ENCODE measurements at regions of chr6 and their contacts with region 1.

Region 1: GRCh38 chr6:38493931-38494547 is 145.7 kb downstream of the BTBD9 start:
- DNase-seq: peak; percentile 57 to 85 (median 76)
- ATAC-seq: peak; percentile 46
- H3K4me3 ChIP-seq: no peak overlapping the region
- H3K4me3 Mint-ChIP-seq: no peak overlapping the region
- H3K27ac ChIP-seq: no peak overlapping the region
- H3K27ac Mint-ChIP-seq: no peak overlapping the region
- H3K4me1 ChIP-seq: no peaks in the 10 kb centered on the region
- H3K4me1 Mint-ChIP-seq: no peaks in the 10 kb centered on the region
- H3K27me3 ChIP-seq: no peaks in the 10 kb centered on the region
- H3K27me3 Mint-ChIP-seq: no peaks in the 10 kb centered on the region
- CTCF ChIP-seq: peak; percentile 99

Region 2: DNA sequence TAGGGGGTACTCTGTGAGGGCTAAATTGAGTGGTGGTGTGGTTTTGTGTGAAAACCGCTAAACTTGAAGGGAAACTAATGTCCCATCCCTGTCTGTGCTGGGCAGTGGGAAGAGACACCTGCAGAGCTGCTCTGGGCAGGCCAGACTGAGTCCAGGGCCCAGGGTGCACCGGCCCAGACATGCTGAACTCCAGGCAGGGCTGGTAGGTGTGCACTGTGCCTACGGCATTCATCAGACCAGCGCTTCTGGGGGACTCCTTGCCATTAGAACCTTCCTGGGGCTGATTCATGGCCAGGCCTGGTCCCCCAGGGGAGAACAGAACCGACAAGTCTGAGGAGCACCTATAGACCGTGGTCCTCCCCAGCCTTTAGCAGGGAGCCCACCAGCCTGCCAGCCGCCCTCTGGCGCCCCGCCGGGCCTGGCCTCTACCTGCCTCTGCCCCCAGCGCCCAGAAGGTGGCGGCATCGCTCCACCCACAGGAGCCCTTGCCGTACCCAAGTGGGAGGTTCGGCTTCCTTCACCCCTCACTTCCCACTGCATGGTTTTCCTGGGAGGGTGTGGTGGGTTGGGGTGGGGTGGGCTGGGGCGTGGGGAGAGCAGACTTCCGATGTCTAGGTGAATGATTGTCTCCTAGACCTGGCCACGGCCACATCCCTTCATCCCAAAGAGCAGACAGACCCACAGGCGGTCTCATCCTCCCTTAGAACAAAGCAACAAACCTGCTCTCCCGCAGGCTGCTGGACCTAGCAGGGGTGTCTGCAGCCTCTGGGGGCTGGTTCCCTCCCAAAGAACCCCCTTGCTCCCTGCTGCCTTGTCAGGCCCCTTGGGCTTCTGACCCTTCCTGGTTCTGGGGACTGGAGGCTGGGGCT is 1009.9 kb before region 1 on chr6:
- CTCF ChIA-PET with region 1: no interaction called
- POLR2A ChIA-PET with region 1: no interaction called
- intact Hi-C with region 1: loop called in 1 of 2 experiments (anchors 1 kb)
- DNase-seq: peak; percentile 59 to 90 (median 77)
- ATAC-seq: peak; percentile 93
- H3K4me3 ChIP-seq: no peak overlapping the region
- H3K4me3 Mint-ChIP-seq: no peak overlapping the region
- H3K27ac ChIP-seq: peak overlapping the region in 1 of 2 experiments; percentile 47
- H3K27ac Mint-ChIP-seq: no peak overlapping the region
- H3K4me1 ChIP-seq: peaks cover 14% of the 10 kb centered on the region
- H3K4me1 Mint-ChIP-seq: peaks cover 13% of the 10 kb centered on the region
- H3K27me3 ChIP-seq: no peaks in the 10 kb centered on the region
- H3K27me3 Mint-ChIP-seq: no peaks in the 10 kb centered on the region
- CTCF ChIP-seq: peak; percentile 93

Region 3: GRCh38 chr6:37705239-37706051 is 788.6 kb before region 1 on chr6:
- CTCF ChIA-PET with region 1: interaction called, 4 read pairs
- POLR2A ChIA-PET with region 1: no interaction called
- intact Hi-C with region 1: loop called in 1 of 2 experiments (anchors 2 kb)
- DNase-seq: peak; percentile 47 to 89 (median 80)
- ATAC-seq: peak; percentile 95
- H3K4me3 ChIP-seq: peak overlapping the region; percentile 56 to 66
- H3K4me3 Mint-ChIP-seq: peak overlapping the region; percentile 84
- H3K27ac ChIP-seq: peak overlapping the region in 1 of 2 experiments; percentile 36
- H3K27ac Mint-ChIP-seq: peak overlapping the region; percentile 62
- H3K4me1 ChIP-seq: peaks cover 6% of the 10 kb centered on the region
- H3K4me1 Mint-ChIP-seq: peaks cover 15% of the 10 kb centered on the region
- H3K27me3 ChIP-seq: no peaks in the 10 kb centered on the region
- H3K27me3 Mint-ChIP-seq: no peaks in the 10 kb centered on the region
- CTCF ChIP-seq: peak; percentile 62

Region 4: DNA sequence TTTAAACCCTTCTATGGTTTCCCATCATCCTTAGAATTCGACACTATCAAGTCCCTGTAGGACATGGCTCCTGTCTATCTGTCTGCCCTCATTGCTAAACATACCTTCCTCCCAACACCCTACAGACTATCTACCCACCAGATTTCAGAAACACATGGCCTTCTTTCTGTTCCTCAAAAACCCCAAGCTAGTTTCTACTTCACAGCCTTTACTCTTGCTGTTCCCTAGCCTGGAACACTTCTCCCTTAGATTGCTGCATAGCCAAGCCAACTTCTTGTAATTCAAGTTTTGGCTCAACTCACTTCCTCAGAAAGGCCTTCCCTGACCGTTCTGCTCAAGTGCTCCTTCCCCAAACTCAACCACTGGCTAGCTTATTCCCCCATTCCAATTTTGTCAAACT is 10.5 kb before region 1 on chr6:
- CTCF ChIA-PET with region 1: interaction called, 23 read pairs
- POLR2A ChIA-PET with region 1: no interaction called
- intact Hi-C with region 1: no loop called
- DNase-seq: no peak
- ATAC-seq: no peak
- H3K4me3 ChIP-seq: no peak overlapping the region
- H3K4me3 Mint-ChIP-seq: no peak overlapping the region
- H3K27ac ChIP-seq: no peak overlapping the region
- H3K27ac Mint-ChIP-seq: no peak overlapping the region
- H3K4me1 ChIP-seq: no peaks in the 10 kb centered on the region
- H3K4me1 Mint-ChIP-seq: peaks cover 4% of the 10 kb centered on the region
- H3K27me3 ChIP-seq: no peaks in the 10 kb centered on the region
- H3K27me3 Mint-ChIP-seq: no peaks in the 10 kb centered on the region
- CTCF ChIP-seq: no peak

Region 5: DNA sequence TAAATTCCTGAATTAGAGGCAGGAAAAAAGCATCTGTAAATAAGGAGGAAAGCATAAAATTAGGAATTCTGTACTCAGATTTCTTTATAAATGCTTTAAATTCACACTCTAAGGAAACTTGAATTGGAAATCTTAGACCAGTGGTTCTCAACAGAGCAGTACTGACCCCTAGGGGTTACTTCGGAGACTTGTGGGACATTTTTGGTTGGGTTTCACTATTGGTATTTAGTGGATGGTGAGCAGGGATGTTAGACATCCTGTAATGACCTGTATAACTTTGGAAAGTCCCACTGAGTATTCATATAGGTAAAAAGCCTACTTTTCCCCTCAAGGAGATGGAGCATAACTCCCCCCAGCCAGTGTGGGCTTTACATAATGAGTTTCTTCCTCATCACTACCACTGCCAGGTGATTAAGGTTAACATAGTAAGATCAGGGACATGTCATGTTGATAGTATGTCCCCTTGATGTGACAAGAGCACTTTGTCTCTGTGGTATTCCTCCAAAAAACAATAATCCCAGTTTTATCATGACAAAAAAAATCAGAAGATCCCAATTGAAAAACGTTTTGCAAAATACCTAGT is 177.9 kb after region 1 on chr6:
- CTCF ChIA-PET with region 1: no interaction called
- POLR2A ChIA-PET with region 1: no interaction called
- intact Hi-C with region 1: loop called (anchors 1 to 2 kb)
- DNase-seq: peak in 4 of 9 experiments; percentile 24 to 70 (median 43)
- ATAC-seq: peak; percentile 74
- H3K4me3 ChIP-seq: no peak overlapping the region
- H3K4me3 Mint-ChIP-seq: no peak overlapping the region
- H3K27ac ChIP-seq: no peak overlapping the region
- H3K27ac Mint-ChIP-seq: no peak overlapping the region
- H3K4me1 ChIP-seq: peaks cover 6% of the 10 kb centered on the region
- H3K4me1 Mint-ChIP-seq: peaks cover 6% of the 10 kb centered on the region
- H3K27me3 ChIP-seq: no peaks in the 10 kb centered on the region
- H3K27me3 Mint-ChIP-seq: no peaks in the 10 kb centered on the region
- CTCF ChIP-seq: peak; percentile 75

Measured in CD8-positive, alpha-beta T cell (primary cell).